Left ventricle myocardium superior (tissue), 1 donor: ENCODE measurements at regions of chr22 and their contacts with region 1.

Region 1: DNA sequence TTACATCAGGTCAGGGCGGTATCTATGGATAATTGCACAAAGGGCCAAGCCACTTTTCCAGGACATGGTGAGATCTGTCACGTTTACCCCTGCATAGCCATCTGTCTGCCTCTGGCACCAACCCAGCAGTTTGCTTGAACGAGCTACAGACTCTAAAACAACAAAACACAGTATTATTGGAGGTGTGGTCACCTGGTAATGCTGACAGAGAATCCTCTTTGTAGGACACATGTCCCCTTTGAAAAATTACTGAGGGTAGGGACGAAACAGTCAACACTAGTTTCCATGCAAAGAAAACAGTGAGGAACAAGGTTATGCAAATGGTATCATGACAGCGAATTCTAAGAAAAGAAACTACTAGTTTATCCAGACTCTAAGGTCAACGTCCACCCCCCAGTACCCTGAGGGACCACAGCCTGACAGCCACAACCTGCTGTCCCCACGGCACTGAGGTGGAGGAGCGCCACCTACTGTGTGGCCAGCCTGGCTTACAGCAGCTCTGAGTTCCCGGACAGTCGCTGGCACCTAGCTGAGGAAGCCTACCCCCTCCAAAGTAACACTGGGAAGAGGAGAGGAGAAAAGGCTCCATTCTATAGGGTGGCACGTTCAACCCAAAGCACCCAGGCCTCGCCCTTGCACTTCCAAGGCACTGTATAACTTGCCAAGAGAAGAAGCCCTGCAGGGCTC is 117.4 kb upstream of the BID start:
- DNase-seq: peak; percentile 85
- ATAC-seq: peak; percentile 77

Region 2: GRCh38 chr22:17836992-17837742 is 54.5 kb before region 1 on chr22:
- intact Hi-C with region 1: loop called (anchors 5 kb)
- DNase-seq: peak; percentile 52
- ATAC-seq: peak; percentile 29

Region 3: DNA sequence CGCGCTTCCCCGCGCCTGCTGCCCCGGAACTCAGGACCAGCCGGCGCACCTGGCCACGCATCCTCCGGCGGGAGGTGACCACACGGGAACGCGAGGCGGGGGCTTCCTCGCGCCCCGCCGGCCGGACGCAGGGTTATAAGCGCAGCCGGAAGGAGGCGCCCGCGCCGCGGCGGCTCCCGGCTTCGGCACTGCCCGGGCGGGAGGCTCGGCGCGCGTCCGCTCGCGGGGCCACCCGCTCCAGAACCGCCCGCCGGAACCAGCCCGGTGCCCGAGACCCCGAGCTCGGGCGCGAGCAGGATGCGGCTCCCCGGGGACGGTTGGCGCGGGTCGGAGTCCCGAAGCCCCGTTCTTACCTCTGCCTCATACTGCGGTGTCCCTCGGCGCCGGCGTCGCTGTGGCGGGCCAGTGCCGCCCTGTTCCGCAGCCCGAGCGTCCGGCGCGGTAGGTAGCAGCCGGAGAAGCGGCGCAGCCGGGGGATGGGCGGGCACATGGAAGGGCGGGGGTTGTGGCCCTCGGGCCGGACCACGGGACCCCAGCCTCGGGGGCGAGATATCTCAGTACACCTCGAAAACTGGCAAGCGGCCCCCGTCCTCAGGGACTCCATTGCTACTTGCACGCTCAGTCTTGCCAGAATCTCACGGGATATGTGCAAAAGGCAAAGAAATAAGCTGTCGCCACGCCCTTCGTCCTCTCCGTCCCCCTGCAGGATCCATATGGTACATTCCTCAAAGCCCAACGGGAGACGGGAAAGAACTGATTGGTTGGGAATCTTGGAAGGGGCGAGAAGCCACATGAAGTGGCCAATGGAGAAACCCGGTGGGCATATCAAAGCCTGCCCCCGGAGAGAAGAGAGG is 109.6 kb after region 1 on chr22:
- intact Hi-C with region 1: no loop called
- DNase-seq: peak; percentile 92
- ATAC-seq: peak; percentile 96